ENCODE measurements at regions of chr16 and their contacts with region 1.

Region 1: DNA sequence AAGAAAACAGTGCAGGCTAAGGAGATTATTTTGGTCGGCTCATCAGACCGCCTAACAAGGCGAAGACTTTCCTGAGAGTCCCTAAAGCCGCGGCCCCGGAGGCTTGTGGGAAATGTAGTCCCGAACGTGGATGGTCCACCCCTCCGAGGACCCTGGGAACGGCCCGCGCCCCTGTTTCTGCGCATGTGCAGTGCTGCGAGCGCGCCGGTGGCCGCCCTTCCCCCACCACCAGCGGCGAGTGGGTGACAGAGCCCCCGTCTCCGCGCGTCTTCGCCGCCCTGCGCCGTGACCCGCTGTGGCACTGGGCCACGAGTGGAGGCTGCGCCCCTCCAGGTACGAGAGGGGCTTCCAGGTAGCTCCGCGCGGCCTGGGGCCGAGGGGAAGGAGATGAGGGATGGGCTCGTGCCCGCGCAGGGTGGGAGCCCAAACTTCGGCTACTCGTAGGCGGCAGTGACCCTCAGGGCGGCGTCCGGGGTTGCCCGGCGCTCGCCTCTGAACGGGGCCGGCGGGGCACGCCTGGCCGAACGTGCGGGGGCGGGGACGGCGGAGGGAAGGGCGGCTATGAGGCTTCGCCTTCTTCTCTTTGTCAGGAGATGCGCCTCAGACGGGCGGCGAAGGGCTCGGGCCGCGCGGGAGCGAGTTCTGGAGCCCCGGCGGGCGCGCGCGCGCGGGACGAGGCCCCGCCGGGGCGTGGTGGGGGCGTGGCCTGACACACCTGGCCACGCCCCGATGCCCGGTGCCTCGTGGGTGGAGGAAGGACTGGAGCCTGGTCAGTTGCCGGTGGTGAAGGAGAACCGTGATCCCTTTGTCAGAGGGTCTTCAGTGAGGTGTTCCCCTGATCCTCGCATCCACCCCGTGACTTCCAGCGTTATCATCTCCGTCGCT is at the start of gene ZFP1:
- DNase-seq: peak; percentile 91 to 98 (median 95)
- ATAC-seq: peak; percentile 93
- H3K4me3 ChIP-seq: peak within 1 kb of the TSS; percentile 98
- H3K4me3 Mint-ChIP-seq: peak within 1 kb of the TSS; percentile 85 to 92 (median 89)
- H3K27ac ChIP-seq: peak within 1 kb of the TSS; percentile 89
- H3K27ac Mint-ChIP-seq: peak within 1 kb of the TSS; percentile 66 to 90 (median 86)
- H3K4me1 ChIP-seq: peaks cover 0 to 6% of the 10 kb centered on the region in 2 donors
- H3K4me1 Mint-ChIP-seq: peaks cover 13 to 31% (median 27%) of the 10 kb centered on the region in 7 donors
- H3K27me3 ChIP-seq: no peaks in the 10 kb centered on the region
- H3K27me3 Mint-ChIP-seq: no peaks in the 10 kb centered on the region
- total RNA-seq, gene ZFP1: 8.6 to 13.4 (median 10.1) TPM

Region 2: GRCh38 chr16:74843719-74844433 is 304.7 kb before region 1 on chr16:
- CTCF ChIA-PET with region 1: no interaction called
- POLR2A ChIA-PET with region 1: no interaction called
- intact Hi-C with region 1: no loop called
- DNase-seq: no peak
- ATAC-seq: no peak
- H3K4me3 ChIP-seq: no peak overlapping the region
- H3K4me3 Mint-ChIP-seq: no peak overlapping the region
- H3K27ac ChIP-seq: no peak overlapping the region
- H3K27ac Mint-ChIP-seq: no peak overlapping the region
- H3K4me1 ChIP-seq: no peaks in the 10 kb centered on the region
- H3K4me1 Mint-ChIP-seq: peaks cover 0 to 5% (median 0%) of the 10 kb centered on the region in 7 donors
- H3K27me3 ChIP-seq: no peaks in the 10 kb centered on the region
- H3K27me3 Mint-ChIP-seq: peaks cover 0 to 24% (median 0%) of the 10 kb centered on the region in 5 donors

Region 3: DNA sequence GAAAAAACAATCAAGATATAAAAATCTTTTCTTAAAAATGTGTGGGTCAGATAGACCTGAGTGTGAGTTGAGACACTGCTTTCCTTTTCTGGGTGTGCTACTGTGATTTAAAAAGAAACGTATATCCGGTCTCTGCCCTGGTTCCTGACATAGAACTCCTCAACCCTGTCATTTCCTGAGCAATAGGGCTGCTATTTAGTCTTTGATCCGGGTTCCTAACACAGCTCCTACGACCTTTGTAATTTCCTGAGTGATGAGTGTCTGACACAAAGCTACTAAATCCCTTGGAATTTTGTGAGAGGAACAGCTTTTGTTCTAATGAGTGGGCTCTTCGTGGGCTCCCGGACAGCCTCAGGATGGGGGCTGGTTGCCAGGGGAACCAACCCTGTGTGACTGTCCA is 280.1 kb before region 1 on chr16:
- CTCF ChIA-PET with region 1: no interaction called
- POLR2A ChIA-PET with region 1: no interaction called
- intact Hi-C with region 1: loop called in 1 of 2 experiments (anchors 1 kb)
- DNase-seq: peak in 6 of 9 donors; percentile 28 to 63 (median 42)
- ATAC-seq: peak; percentile 89
- H3K4me3 ChIP-seq: no peak overlapping the region
- H3K4me3 Mint-ChIP-seq: peak overlapping the region; percentile 8 to 78 (median 56)
- H3K27ac ChIP-seq: peak overlapping the region; percentile 69
- H3K27ac Mint-ChIP-seq: peak overlapping the region; percentile 85 to 96 (median 95)
- H3K4me1 ChIP-seq: peaks cover 3 to 22% of the 10 kb centered on the region in 2 donors
- H3K4me1 Mint-ChIP-seq: peaks cover 16 to 33% (median 29%) of the 10 kb centered on the region in 7 donors
- H3K27me3 ChIP-seq: no peaks in the 10 kb centered on the region
- H3K27me3 Mint-ChIP-seq: no peaks in the 10 kb centered on the region

Region 4: DNA sequence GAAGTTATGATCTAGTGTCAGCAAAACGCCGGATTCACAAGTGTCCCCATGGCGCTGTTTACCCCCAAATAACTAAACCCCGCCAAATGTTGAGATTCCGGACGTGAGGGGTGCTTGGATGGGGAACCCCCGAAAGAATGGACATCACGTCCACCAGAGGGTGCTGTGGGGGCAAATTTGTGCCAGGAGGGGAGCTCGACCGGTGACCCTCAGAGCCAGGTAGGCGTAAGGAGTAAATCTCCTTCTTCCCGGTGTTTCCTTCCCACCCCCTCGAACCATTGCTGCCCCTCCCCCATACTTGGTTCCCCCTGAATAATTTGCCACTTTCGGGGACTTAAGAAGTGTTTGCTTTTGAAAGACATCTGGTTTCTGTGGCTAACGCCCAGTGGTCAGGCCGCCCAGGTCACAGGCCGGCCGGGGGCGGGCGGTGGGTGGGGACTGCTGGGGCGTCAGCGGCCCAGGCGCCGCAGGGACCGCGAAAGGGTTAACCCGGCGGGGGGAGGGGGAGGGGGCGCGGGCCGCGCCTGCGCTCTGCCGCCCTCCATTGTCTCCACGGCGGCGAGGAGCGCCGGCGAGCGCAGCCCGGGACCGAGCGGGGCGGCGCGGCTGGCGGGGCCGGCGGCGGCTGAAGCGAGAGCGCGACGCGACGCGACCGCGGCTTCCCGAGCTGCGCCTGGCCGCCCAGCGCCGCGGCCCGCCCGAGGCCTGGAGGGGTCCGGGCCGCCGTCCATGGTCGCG is 149.9 kb before region 1 on chr16 and contains the start of gene ZNRF1:
- CTCF ChIA-PET with region 1: no interaction called
- POLR2A ChIA-PET with region 1: no interaction called
- intact Hi-C with region 1: loop called (anchors 1 kb)
- DNase-seq: peak; percentile 50 to 82 (median 67)
- ATAC-seq: peak; percentile 91
- H3K4me3 ChIP-seq: peak within 1 kb of the TSS; percentile 69
- H3K4me3 Mint-ChIP-seq: peak within 1 kb of the TSS; percentile 79 to 92 (median 87)
- H3K27ac ChIP-seq: peak within 1 kb of the TSS; percentile 54
- H3K27ac Mint-ChIP-seq: peak within 1 kb of the TSS; percentile 81 to 91 (median 86)
- H3K4me1 ChIP-seq: peaks cover 5 to 9% of the 10 kb centered on the region in 2 donors
- H3K4me1 Mint-ChIP-seq: peaks cover 5 to 42% (median 17%) of the 10 kb centered on the region in 7 donors
- H3K27me3 ChIP-seq: no peaks in the 10 kb centered on the region
- H3K27me3 Mint-ChIP-seq: peaks cover 0 to 19% (median 0%) of the 10 kb centered on the region in 5 donors
- total RNA-seq, gene ZNRF1: 1.8 to 27.9 (median 2.6) TPM

Region 5: GRCh38 chr16:75110637-75111513 is 37.7 kb before region 1 on chr16:
- CTCF ChIA-PET with region 1: no interaction called
- POLR2A ChIA-PET with region 1: no interaction called
- intact Hi-C with region 1: loop called (anchors 1 to 2 kb)
- DNase-seq: peak; percentile 66 to 83 (median 78)
- ATAC-seq: peak; percentile 91
- H3K4me3 ChIP-seq: peak overlapping the region; percentile 36
- H3K4me3 Mint-ChIP-seq: peak overlapping the region in 9 of 10 donors; percentile 34 to 78 (median 59)
- H3K27ac ChIP-seq: no peak overlapping the region
- H3K27ac Mint-ChIP-seq: peak overlapping the region in 6 of 9 donors; percentile 54 to 93 (median 78)
- H3K4me1 ChIP-seq: peaks cover 19 to 32% of the 10 kb centered on the region in 2 donors
- H3K4me1 Mint-ChIP-seq: peaks cover 30 to 66% (median 35%) of the 10 kb centered on the region in 7 donors
- H3K27me3 ChIP-seq: no peaks in the 10 kb centered on the region
- H3K27me3 Mint-ChIP-seq: peaks cover 0 to 10% (median 10%) of the 10 kb centered on the region in 5 donors

Region 6: DNA sequence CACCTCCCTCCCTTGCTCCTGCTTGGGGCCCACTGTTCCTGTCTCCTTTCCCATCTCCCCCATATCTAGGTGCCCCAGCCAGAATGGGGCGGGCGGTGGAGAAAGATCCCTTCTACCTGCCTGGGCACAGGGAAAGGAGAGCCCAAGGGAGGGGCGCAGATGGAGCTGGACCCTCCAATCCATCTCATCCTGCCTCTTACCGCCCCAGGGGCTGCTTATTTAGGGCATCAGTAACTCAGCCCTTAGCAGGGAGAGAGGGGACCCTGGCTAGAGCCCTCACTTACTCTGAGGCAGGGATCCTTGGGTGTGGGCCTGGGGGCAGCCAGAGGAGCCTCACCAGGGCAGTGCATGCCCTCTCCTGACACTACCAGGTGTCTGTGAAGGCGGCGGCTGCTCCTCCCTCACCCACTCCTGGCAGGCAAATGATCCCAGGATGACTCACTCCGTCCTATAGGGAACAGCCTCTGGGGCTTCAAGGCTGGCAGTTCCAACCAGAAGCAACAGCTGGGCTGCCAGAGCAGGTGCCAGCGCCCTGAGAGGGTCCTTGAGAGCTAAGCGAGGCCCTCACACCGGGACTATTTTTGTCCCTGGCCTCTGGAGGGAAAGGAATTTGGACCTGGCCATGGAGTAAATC is 119.2 kb after region 1 on chr16:
- CTCF ChIA-PET with region 1: no interaction called
- POLR2A ChIA-PET with region 1: no interaction called
- intact Hi-C with region 1: no loop called
- DNase-seq: no peak
- ATAC-seq: peak; percentile 16
- H3K4me3 ChIP-seq: no peak overlapping the region
- H3K4me3 Mint-ChIP-seq: no peak overlapping the region
- H3K27ac ChIP-seq: no peak overlapping the region
- H3K27ac Mint-ChIP-seq: no peak overlapping the region
- H3K4me1 ChIP-seq: no peaks in the 10 kb centered on the region
- H3K4me1 Mint-ChIP-seq: peaks cover 0 to 13% (median 13%) of the 10 kb centered on the region in 7 donors
- H3K27me3 ChIP-seq: no peaks in the 10 kb centered on the region
- H3K27me3 Mint-ChIP-seq: peaks cover 26 to 51% (median 45%) of the 10 kb centered on the region in 5 donors

Region 7: GRCh38 chr16:75432828-75433731 is 284.5 kb after region 1 on chr16 and contains the start of gene CFDP1:
- CTCF ChIA-PET with region 1: no interaction called
- POLR2A ChIA-PET with region 1: no interaction called
- intact Hi-C with region 1: loop called (anchors 1 kb)
- DNase-seq: peak; percentile 93 to 98 (median 95)
- ATAC-seq: peak; percentile 92
- H3K4me3 ChIP-seq: peak within 1 kb of the TSS; percentile 92
- H3K4me3 Mint-ChIP-seq: peak within 1 kb of the TSS; percentile 87 to 99 (median 94)
- H3K27ac ChIP-seq: peak within 1 kb of the TSS; percentile 94
- H3K27ac Mint-ChIP-seq: peak within 1 kb of the TSS; percentile 94 to 100 (median 97)
- H3K4me1 ChIP-seq: peaks cover 5 to 9% of the 10 kb centered on the region in 2 donors
- H3K4me1 Mint-ChIP-seq: peaks cover 19 to 53% (median 43%) of the 10 kb centered on the region in 7 donors
- H3K27me3 ChIP-seq: no peaks in the 10 kb centered on the region
- H3K27me3 Mint-ChIP-seq: no peaks in the 10 kb centered on the region
- total RNA-seq, gene CFDP1: 34.9 to 41.4 (median 39.4) TPM

Region 8: GRCh38 chr16:75555707-75556430 is 407.3 kb after region 1 on chr16 and contains the start of gene TMEM231:
- CTCF ChIA-PET with region 1: no interaction called
- POLR2A ChIA-PET with region 1: no interaction called
- intact Hi-C with region 1: loop called (anchors 1 to 5 kb)
- DNase-seq: peak; percentile 91 to 97 (median 93)
- ATAC-seq: peak; percentile 98
- H3K4me3 ChIP-seq: peak within 1 kb of the TSS; percentile 84
- H3K4me3 Mint-ChIP-seq: peak within 1 kb of the TSS; percentile 74 to 93 (median 88)
- H3K27ac ChIP-seq: peak within 1 kb of the TSS; percentile 66
- H3K27ac Mint-ChIP-seq: peak within 1 kb of the TSS; percentile 81 to 97 (median 89)
- H3K4me1 ChIP-seq: peaks cover 10% of the 10 kb centered on the region in 2 donors
- H3K4me1 Mint-ChIP-seq: peaks cover 5 to 14% (median 10%) of the 10 kb centered on the region in 7 donors
- H3K27me3 ChIP-seq: no peaks in the 10 kb centered on the region
- H3K27me3 Mint-ChIP-seq: peaks cover 0 to 33% (median 5%) of the 10 kb centered on the region in 5 donors
- total RNA-seq, gene TMEM231: 1.5 to 3.9 (median 3.4) TPM

Measured in naive thymus-derived CD4-positive, alpha-beta T cell (primary cell).